Posterior cingulate gyrus (tissue), 11 donors: ENCODE measurements at regions of chr3 and their contacts with region 1.

Region 1: DNA sequence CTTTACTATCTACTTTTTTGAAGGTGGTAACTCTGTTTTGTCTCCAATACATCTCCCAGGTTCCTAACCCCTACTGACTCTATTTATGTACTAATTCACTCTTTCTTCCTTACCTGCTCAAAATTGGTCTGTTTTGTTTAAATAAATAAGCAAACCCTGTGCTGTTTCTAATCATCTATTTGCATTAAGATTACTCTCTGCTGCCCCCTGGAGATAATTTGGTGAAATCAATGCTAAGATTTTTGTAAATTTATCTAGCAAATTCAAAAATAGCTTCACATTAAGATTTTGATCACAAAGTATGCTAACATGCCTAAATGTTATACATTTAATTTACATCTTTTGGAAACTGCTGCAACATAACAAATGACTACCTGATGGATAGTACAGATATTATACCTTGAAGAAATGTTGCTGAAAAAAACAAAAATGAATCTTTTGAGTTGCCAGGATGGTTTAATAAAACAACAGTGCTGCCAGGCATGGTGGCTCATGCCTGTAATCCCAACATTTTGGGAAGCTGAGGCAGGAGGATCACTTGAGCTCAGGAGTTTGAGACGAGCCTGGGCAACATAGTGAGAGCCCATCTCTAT is 4.4 kb upstream of the CD200R1 start:
- DNase-seq: no peak

Region 2: GRCh38 chr3:112642912-112643506 is 336.3 kb before region 1 on chr3:
- intact Hi-C with region 1: loop called (anchors 1 kb)
- DNase-seq: peak; percentile 58 to 95 (median 78)

Region 3: DNA sequence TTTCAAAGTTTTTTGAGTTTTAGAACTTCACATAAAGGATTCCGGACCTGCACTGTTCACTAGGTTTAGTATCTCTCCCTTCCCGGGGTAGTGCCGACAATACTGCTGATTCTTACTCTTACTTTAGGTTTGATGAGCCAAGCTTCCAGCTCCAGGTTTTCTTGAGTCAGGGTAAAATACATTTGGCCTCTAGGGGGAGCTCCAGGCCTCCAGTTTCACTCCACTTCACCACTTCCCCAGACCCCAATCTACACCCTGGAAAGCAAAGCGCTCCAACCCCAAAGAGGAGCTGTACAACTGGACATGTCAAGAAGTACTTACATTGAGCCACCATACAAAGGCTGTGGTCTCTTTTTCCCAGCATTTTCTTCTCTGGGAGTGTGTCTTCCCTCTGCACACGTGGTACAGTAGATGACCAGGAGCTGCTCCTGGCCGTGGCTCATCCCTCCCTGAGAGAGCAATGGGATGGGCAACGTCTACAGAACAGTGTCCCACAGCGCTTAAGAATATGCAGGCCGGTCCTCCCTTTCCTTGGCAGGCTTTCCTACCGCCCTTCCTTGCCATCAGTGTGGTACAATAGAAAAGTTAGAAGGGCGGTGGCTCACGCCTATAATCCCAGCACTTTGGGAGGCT is 244.5 kb before region 1 on chr3:
- intact Hi-C with region 1: loop called (anchors 10 kb)
- DNase-seq: peak in 5 of 10 donors; percentile 8 to 52 (median 24)

Region 4: DNA sequence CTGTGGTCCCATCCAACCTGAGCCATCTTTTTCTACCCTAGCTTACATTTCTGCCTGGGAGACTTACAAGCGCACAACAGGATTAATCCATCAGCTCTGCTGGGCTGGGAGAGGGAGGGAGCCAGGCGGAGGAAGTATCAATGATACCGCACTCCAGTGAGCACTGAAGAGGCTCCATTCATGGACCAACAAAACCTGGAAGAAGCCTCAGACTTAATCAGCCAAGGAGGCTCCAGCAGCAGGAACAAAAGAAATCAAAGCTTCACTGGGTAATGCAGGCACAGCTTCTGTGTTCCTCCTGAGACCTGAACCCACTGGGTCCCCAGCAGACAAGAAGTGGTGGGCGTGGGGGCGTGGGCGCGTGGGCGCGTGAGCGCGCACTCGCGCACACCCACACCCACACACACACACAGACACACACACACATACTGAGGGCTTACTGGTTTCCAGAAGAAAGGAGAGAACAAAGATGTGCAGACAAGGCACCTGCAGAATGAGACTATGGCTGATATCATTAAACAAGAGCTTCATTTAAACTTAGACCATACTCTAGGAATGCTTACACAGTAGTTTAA is 145.0 kb after region 1 on chr3:
- intact Hi-C with region 1: no loop called
- DNase-seq: no peak